Activated CD4-positive, alpha-beta T cell treated with anti-CD3 and anti-CD28 coated beads for 36 hours (primary cell): ENCODE measurements at regions of chr14 and their contacts with region 1.

Region 1: GRCh38 chr14:60331201-60332045 is 82.4 kb downstream of the PPM1A start:
- DNase-seq: peak; percentile 90
- ATAC-seq: peak; percentile 82
- H3K4me3 Mint-ChIP-seq: peak overlapping the region; percentile 74
- H3K27ac Mint-ChIP-seq: peak overlapping the region; percentile 97
- H3K4me1 Mint-ChIP-seq: peaks cover 36% of the 10 kb centered on the region
- H3K27me3 Mint-ChIP-seq: peaks cover 34% of the 10 kb centered on the region

Region 2: GRCh38 chr14:60091550-60092530 is 239.6 kb before region 1 on chr14 and contains the start of gene PCNX4:
- CTCF ChIA-PET with region 1: no interaction called
- POLR2A ChIA-PET with region 1: no interaction called
- intact Hi-C with region 1: loop called in 1 of 2 experiments (anchors 2 kb)
- DNase-seq: peak; percentile 96
- ATAC-seq: peak; percentile 96
- H3K4me3 Mint-ChIP-seq: peak within 1 kb of the TSS; percentile 91
- H3K27ac Mint-ChIP-seq: peak within 1 kb of the TSS; percentile 92
- H3K4me1 Mint-ChIP-seq: peaks cover 34% of the 10 kb centered on the region
- H3K27me3 Mint-ChIP-seq: no peaks in the 10 kb centered on the region
- total RNA-seq, gene PCNX4: 27.0 to 27.6 TPM

Region 3: GRCh38 chr14:60248697-60249318 is 82.6 kb before region 1 on chr14 and contains the start of gene PPM1A:
- CTCF ChIA-PET with region 1: interaction called, 8 read pairs
- POLR2A ChIA-PET with region 1: interaction called, 6 read pairs
- intact Hi-C with region 1: loop called (anchors 1 to 5 kb)
- DNase-seq: peak; percentile 97
- ATAC-seq: peak; percentile 73
- H3K4me3 Mint-ChIP-seq: peak within 1 kb of the TSS; percentile 94
- H3K27ac Mint-ChIP-seq: peak within 1 kb of the TSS; percentile 100
- H3K4me1 Mint-ChIP-seq: peaks cover 50% of the 10 kb centered on the region
- H3K27me3 Mint-ChIP-seq: no peaks in the 10 kb centered on the region
- total RNA-seq, gene PPM1A: 30.4 to 41.5 TPM

Region 4: GRCh38 chr14:60349663-60350365 is 18.4 kb after region 1 on chr14:
- CTCF ChIA-PET with region 1: interaction called, 24 read pairs
- POLR2A ChIA-PET with region 1: no interaction called
- intact Hi-C with region 1: no loop called
- DNase-seq: peak; percentile 40
- ATAC-seq: peak; percentile 39
- H3K4me3 Mint-ChIP-seq: no peak overlapping the region
- H3K27ac Mint-ChIP-seq: no peak overlapping the region
- H3K4me1 Mint-ChIP-seq: no peaks in the 10 kb centered on the region
- H3K27me3 Mint-ChIP-seq: no peaks in the 10 kb centered on the region

Region 5: DNA sequence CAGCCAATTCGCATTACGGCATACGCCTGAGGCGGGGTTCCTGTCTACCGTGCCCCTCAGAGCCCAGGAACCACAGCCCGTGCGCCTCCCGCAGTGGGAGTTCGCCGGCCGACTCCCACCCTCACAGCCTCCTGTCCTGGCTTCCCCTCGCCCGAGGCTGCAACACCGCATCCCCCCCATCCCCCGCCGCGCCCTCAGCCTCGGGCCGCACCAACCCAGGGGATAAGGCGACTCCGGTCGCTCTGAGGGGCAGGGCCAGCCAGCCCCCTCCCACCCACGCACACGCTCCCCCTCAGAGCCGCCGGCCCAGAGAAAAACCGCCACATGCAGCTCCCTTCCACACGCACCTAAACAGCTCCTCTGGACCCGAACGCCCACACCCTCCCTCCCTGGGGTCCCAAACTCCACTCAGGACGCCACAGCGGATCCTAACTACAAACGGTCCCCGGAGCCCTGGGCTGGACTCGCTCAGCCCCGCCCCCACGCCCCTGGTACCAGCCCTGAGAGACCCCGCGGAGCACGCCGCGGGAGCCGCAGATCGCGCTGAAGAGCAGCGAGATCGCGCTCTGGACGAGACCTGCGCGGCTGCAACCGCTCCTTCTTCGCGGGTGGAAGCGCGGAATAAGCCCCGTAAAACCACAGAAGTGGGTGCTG is 154.3 kb after region 1 on chr14 and contains the start of gene C14orf39:
- CTCF ChIA-PET with region 1: no interaction called
- POLR2A ChIA-PET with region 1: no interaction called
- intact Hi-C with region 1: no loop called
- DNase-seq: peak; percentile 57
- ATAC-seq: peak; percentile 33
- H3K4me3 Mint-ChIP-seq: peak within 1 kb of the TSS; percentile 24
- H3K27ac Mint-ChIP-seq: no peak within 1 kb of the TSS
- H3K4me1 Mint-ChIP-seq: peaks cover 6% of the 10 kb centered on the region
- H3K27me3 Mint-ChIP-seq: peaks cover 24% of the 10 kb centered on the region
- total RNA-seq, gene C14orf39: not detected

Region 6: GRCh38 chr14:60561845-60562746 is 230.7 kb after region 1 on chr14:
- CTCF ChIA-PET with region 1: interaction called, 3 read pairs
- POLR2A ChIA-PET with region 1: no interaction called
- intact Hi-C with region 1: loop called (anchors 1 to 5 kb)
- DNase-seq: peak; percentile 60
- ATAC-seq: peak; percentile 49
- H3K4me3 Mint-ChIP-seq: no peak overlapping the region
- H3K27ac Mint-ChIP-seq: no peak overlapping the region
- H3K4me1 Mint-ChIP-seq: no peaks in the 10 kb centered on the region
- H3K27me3 Mint-ChIP-seq: peaks cover 1% of the 10 kb centered on the region

Region 7: GRCh38 chr14:61080591-61081010 is 749.2 kb after region 1 on chr14:
- CTCF ChIA-PET with region 1: no interaction called
- POLR2A ChIA-PET with region 1: no interaction called
- intact Hi-C with region 1: no loop called
- DNase-seq: no peak
- ATAC-seq: no peak
- H3K4me3 Mint-ChIP-seq: no peak overlapping the region
- H3K27ac Mint-ChIP-seq: no peak overlapping the region
- H3K4me1 Mint-ChIP-seq: no peaks in the 10 kb centered on the region
- H3K27me3 Mint-ChIP-seq: no peaks in the 10 kb centered on the region

Region 8: DNA sequence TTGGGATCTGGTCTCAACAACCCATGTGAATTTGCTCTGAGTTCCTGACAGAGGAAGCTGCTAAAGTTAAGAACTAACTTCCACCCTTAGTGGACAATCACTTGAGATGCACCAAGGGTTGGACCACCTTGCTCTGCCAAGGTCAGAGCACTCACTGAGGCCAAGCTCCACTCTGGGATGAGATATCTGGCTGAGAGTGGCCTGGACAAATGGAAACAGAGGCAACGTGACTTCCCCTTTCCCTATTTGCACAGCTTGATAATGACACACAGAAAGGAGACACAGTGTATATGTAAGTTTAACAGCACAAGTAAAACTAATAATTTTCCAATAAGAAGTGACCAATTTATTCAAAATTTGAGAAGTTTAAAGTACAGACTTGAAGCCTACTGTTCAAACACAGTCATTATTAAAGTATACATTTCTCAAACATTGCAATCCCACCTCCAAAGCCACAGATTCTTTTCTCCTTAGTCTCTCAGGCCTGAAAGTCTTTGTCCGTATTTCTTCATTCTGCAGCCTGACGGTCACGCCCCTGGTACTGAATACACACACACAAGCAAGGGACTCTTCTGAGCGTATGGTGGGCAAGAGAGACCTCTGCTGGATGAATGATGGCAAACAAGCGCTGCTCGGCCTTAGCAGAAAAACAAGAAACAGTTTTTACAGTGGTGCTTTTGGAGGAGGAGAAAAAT is 921.1 kb after region 1 on chr14:
- CTCF ChIA-PET with region 1: no interaction called
- POLR2A ChIA-PET with region 1: no interaction called
- intact Hi-C with region 1: loop called in 1 of 2 experiments (anchors 5 kb)
- DNase-seq: peak; percentile 79
- ATAC-seq: peak; percentile 91
- H3K4me3 Mint-ChIP-seq: no peak overlapping the region
- H3K27ac Mint-ChIP-seq: no peak overlapping the region
- H3K4me1 Mint-ChIP-seq: peaks cover 5% of the 10 kb centered on the region
- H3K27me3 Mint-ChIP-seq: peaks cover 18% of the 10 kb centered on the region